Endothelial cell of umbilical vein (primary cell): ENCODE measurements at regions of chr5 and their contacts with region 1.

Region 1: GRCh38 chr5:61162010-61162831 is at the start of gene SMIM15:
- DNase-seq: peak; percentile 82
- H3K4me3 ChIP-seq: peak within 1 kb of the TSS; percentile 22 to 70 (median 67)
- H3K27ac ChIP-seq: peak within 1 kb of the TSS; percentile 72
- H3K4me1 ChIP-seq: peaks cover 15% of the 10 kb centered on the region
- H3K27me3 ChIP-seq: no peaks in the 10 kb centered on the region
- CTCF ChIP-seq: no peak
- POLR2A ChIP-seq: peak; percentile 61
- total RNA-seq, gene SMIM15: 48.8 and 54.5 TPM in 2 replicates

Region 2: DNA sequence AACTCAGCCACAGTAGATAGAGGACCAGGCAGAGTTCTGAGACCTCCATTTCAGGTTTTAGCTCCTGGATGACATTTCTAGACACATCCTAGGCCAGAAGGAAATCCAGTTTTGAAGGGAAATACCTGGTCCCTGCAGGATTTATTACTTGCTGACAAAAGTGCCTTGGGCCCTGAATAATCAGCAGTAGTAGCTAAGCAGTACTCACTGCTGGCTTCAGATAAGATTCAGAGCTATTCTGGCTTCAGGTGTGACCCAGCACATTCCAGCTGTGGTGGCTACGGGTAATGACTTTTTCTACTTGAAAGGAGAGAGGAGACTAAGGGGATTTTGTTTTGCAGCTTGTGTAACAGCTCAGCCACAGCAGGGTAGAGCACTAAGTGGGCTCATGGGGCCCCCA is 183.3 kb before region 1 on chr5:
- CTCF ChIA-PET with region 1: no interaction called
- POLR2A ChIA-PET with region 1: no interaction called
- dilution Hi-C with region 1: no loop called
- intact Hi-C with region 1: no loop called
- DNase-seq: no peak
- H3K4me3 ChIP-seq: no peak overlapping the region
- H3K27ac ChIP-seq: no peak overlapping the region
- H3K4me1 ChIP-seq: no peaks in the 10 kb centered on the region
- H3K27me3 ChIP-seq: no peaks in the 10 kb centered on the region
- CTCF ChIP-seq: no peak
- POLR2A ChIP-seq: no peak

Region 3: DNA sequence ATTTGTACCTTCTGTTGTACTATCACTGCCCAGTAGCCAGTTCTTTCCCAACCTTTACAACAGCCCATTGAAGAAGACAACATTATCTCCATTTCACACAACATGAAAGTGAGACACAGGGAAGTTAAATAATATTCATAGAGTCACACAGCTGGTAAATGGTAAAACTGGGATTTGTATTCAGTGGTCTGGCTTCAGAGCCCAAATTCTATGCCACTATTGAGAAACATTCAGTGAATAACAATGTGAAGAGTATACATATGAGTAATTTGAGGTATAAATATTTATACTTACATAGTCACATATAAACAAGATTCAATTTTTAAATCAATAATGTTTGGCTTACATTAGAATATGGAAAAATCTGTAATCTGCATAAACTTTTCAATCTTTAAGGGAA is 13.7 kb before region 1 on chr5:
- CTCF ChIA-PET with region 1: no interaction called
- POLR2A ChIA-PET with region 1: no interaction called
- dilution Hi-C with region 1: no loop called
- intact Hi-C with region 1: loop called (anchors 1 kb)
- DNase-seq: no peak
- H3K4me3 ChIP-seq: no peak overlapping the region
- H3K27ac ChIP-seq: no peak overlapping the region
- H3K4me1 ChIP-seq: no peaks in the 10 kb centered on the region
- H3K27me3 ChIP-seq: no peaks in the 10 kb centered on the region
- CTCF ChIP-seq: no peak
- POLR2A ChIP-seq: no peak

Region 4: GRCh38 chr5:61280205-61280604 is 118.0 kb after region 1 on chr5:
- CTCF ChIA-PET with region 1: no interaction called
- POLR2A ChIA-PET with region 1: no interaction called
- dilution Hi-C with region 1: no loop called
- intact Hi-C with region 1: loop called (anchors 5 kb)
- DNase-seq: peak; percentile 89
- H3K4me3 ChIP-seq: no peak overlapping the region
- H3K27ac ChIP-seq: no peak overlapping the region
- H3K4me1 ChIP-seq: peaks cover 39% of the 10 kb centered on the region
- H3K27me3 ChIP-seq: no peaks in the 10 kb centered on the region
- CTCF ChIP-seq: no peak
- POLR2A ChIP-seq: no peak

Region 5: DNA sequence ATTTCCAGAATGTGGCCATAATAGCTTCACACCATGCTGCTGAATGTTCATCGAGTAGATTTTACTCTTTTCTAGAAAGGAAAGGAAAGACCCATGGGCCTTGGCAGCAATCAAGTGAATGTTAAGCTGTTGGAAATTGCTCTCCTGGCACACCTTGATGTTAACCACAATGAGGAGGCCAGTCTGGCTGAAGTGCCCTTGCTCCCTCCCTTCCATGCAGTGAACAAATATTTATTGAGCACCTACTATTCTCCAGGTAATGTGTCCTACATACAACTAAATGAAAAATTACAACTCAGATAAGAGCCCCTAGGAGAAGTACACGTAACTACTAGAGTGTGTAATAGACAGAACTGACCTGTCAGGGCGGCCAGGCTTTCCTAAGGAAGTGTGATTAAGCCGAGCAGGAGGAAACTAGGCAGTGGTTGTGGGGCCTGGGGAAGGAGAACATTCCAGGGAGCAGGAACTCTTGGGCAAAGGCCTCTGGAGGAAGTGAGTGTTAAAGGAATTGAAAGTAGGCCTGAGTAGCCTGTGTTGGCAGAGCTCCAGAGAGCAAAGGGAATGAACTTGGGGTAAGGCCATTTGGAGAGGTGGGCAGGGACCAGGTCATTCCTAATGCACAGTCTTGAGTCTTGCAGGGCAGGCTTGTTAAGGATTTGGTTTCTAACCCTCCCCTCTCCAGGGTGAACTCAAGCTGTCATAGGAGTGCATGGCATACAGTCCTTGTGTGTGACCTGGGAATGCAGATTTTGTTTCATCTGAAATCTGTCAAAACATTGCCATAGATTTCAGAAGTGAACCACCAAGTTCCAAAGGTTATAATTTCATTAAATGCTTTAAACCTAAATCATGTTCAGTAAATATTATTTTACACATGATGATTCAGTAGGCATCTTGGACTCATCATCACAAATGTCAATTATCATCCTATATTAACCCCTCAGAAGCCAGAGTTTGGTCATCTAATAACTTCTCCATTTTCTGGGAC is 160.8 kb after region 1 on chr5:
- CTCF ChIA-PET with region 1: no interaction called
- POLR2A ChIA-PET with region 1: interaction called, 8 read pairs
- dilution Hi-C with region 1: no loop called
- intact Hi-C with region 1: loop called (anchors 2 kb)
- DNase-seq: peak; percentile 94
- H3K4me3 ChIP-seq: no peak overlapping the region
- H3K27ac ChIP-seq: peak overlapping the region; percentile 72
- H3K4me1 ChIP-seq: peaks cover 58% of the 10 kb centered on the region
- H3K27me3 ChIP-seq: no peaks in the 10 kb centered on the region
- CTCF ChIP-seq: no peak
- POLR2A ChIP-seq: peak; percentile 55

Region 6: DNA sequence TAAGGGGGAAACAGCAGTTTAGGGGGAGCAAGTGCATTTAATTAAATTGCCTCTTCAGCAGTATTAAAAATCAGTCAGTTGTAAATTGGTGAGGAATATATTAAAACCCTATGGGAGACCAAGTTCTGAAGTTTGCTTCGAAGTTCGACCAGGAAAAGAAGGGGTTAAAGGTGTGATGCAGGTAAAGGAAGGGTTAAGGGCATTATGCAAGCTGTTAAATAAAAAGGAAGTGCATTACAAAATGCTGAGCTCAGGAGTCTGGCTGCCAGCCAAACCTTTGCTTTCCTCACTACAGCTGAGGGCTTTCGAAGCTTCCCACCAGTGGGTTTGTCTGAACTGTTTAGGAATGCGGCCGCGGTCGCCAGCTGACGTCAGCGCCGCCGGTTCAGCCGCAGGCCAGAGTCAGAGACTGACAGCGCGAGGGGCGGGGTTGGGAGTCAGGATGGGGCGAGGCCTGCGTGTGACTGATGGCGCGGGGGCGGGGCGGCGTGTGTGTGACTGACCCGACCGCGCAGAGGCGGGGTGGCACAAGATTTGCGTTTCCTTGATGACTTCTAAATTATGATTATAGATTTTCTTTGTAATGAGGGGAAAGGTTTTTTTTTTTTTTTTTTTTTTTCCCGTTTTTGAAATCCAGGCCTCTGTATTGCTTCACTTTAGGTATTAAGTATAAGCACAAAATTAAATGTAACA is 246.4 kb after region 1 on chr5:
- CTCF ChIA-PET with region 1: no interaction called
- POLR2A ChIA-PET with region 1: no interaction called
- dilution Hi-C with region 1: no loop called
- intact Hi-C with region 1: loop called (anchors 2 kb)
- DNase-seq: peak; percentile 99
- H3K4me3 ChIP-seq: peak overlapping the region in 2 of 3 experiments; percentile 15 to 63
- H3K27ac ChIP-seq: peak overlapping the region; percentile 97
- H3K4me1 ChIP-seq: peaks cover 21% of the 10 kb centered on the region
- H3K27me3 ChIP-seq: no peaks in the 10 kb centered on the region
- CTCF ChIP-seq: no peak
- POLR2A ChIP-seq: peak; percentile 52

Region 7: DNA sequence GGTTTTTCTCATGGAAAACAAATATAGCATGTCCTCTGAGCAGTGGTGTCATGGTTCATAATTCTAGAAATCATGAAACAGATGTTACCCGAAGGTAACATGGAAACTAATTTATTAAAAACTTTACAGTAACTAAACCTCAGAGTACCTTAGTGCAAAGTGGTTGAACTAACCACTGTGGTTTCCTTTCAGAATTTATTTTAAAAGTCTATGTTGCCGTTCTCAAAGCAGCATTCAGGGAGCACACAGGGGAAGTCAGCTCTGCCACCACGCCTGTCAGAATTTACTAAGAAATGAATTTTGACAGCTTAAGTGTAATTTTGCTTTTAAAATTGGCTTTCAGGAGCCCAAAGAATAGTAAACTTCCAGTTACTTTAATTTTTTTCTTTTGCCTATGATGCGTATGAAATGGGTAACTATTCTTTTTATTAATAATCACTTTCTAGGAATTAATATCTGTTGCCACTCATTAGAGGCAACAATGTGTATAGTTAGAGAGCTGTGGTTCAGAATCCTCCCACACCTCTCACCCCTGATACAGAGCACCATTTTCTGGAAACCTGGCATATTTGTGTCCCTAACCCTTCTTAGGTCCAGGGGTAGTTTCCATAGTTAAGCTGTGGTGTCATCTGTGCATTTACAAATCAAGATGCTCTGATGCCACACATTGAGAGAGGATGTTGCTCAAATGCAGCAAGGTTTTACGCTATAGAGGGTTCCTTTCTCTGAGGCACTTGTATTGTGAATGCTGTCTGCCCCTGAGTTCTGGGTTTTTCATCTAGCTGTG is 372.5 kb after region 1 on chr5:
- CTCF ChIA-PET with region 1: no interaction called
- POLR2A ChIA-PET with region 1: no interaction called
- dilution Hi-C with region 1: no loop called
- intact Hi-C with region 1: loop called (anchors 10 kb)
- DNase-seq: no peak
- H3K4me3 ChIP-seq: no peak overlapping the region
- H3K27ac ChIP-seq: no peak overlapping the region
- H3K4me1 ChIP-seq: no peaks in the 10 kb centered on the region
- H3K27me3 ChIP-seq: no peaks in the 10 kb centered on the region
- CTCF ChIP-seq: no peak
- POLR2A ChIP-seq: no peak

Region 8: DNA sequence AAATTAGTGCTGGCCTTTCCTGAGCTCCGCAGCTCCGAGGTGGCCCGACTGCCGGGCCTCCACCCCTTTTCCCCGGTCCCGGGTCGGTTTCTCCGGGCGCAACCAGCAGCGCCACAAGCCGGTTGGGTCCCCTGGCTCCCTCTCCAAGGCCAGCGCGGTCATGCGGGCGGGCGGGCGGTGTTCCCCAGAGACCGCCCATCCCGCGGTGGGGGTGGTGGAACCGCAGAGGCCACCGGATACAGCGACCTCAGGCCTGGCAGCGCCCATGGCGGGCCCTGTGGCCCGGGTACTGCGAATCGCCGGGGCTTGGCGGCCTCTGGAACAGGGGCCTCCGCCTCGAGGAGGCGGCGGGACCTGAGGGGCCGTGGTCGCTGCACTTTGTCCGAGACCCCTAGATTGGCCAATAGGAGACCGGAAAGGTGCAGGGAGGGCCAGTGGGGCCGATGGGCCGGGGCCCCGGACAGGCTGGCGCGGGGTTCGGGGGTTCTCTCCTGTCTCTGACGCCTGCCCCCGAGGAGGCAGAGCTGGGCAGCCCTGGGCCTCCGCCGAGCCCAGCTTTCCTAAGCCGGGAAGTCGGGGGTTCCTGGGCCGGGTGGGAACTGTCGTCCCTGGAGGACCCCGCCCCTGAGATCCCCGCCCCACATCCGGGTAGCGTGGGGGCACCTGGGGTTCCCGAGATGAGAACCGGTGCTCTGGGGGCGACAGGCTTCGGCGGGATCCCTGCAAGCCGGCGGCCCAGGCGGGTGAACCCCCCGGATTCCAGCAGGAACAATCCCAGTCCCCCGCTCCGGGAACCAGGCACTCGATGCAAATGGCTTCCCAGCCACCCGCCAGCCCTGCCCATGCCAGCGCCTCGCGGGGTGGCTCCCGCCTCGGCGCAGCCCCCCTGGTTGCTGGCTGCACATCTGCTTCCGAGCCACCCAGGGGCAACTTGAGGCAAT is 463.7 kb after region 1 on chr5:
- CTCF ChIA-PET with region 1: interaction called, 3 read pairs
- POLR2A ChIA-PET with region 1: no interaction called
- dilution Hi-C with region 1: no loop called
- intact Hi-C with region 1: loop called (anchors 5 kb)
- DNase-seq: peak; percentile 51
- H3K4me3 ChIP-seq: peak overlapping the region; percentile 58 to 72 (median 71)
- H3K27ac ChIP-seq: peak overlapping the region; percentile 45
- H3K4me1 ChIP-seq: peaks cover 10% of the 10 kb centered on the region
- H3K27me3 ChIP-seq: no peaks in the 10 kb centered on the region
- CTCF ChIP-seq: no peak
- POLR2A ChIP-seq: no peak